Calu3 (cell line): ENCODE measurements at regions of chr17 and their contacts with region 1.

Region 1: GRCh38 chr17:75364078-75364477 is 41.4 kb downstream of the GRB2 start:
- DNase-seq: no peak
- H3K4me3 Mint-ChIP-seq: no peak overlapping the region
- H3K27ac Mint-ChIP-seq: no peak overlapping the region
- H3K4me1 Mint-ChIP-seq: peaks cover 64% of the 10 kb centered on the region
- H3K27me3 Mint-ChIP-seq: no peaks in the 10 kb centered on the region
- CTCF ChIP-seq: no peak

Region 2: GRCh38 chr17:75345514-75346167 is 18.4 kb before region 1 on chr17:
- CTCF ChIA-PET with region 1: interaction called, 10 read pairs
- intact Hi-C with region 1: loop called (anchors 2 kb)
- DNase-seq: peak; percentile 22
- H3K4me3 Mint-ChIP-seq: peak overlapping the region; percentile 31
- H3K27ac Mint-ChIP-seq: peak overlapping the region; percentile 63
- H3K4me1 Mint-ChIP-seq: peaks cover 62% of the 10 kb centered on the region
- H3K27me3 Mint-ChIP-seq: no peaks in the 10 kb centered on the region
- CTCF ChIP-seq: no peak